ENCODE measurements at regions of chr6 and their contacts with region 1.

Region 1: GRCh38 chr6:128903715-128904114 is 20.8 kb downstream of the LAMA2 start:
- DNase-seq: no peak
- ATAC-seq: peak in 2 of 8 donors; percentile 17 to 56
- H3K4me3 ChIP-seq: no peak overlapping the region
- H3K27ac ChIP-seq: peak overlapping the region in 1 of 10 donors; percentile 0
- H3K4me1 ChIP-seq: peaks cover 0 to 46% (median 12%) of the 10 kb centered on the region in 9 donors
- H3K27me3 ChIP-seq: no peaks in the 10 kb centered on the region
- CTCF ChIP-seq: no peak

Region 2: GRCh38 chr6:128857806-128858205 is 45.9 kb before region 1 on chr6:
- intact Hi-C with region 1: loop called in 1 of 10 experiments (anchors 1 kb)
- DNase-seq: no peak
- ATAC-seq: peak in 1 of 8 donors; percentile 55
- H3K4me3 ChIP-seq: no peak overlapping the region
- H3K27ac ChIP-seq: no peak overlapping the region
- H3K4me1 ChIP-seq: no peaks in the 10 kb centered on the region
- H3K27me3 ChIP-seq: no peaks in the 10 kb centered on the region
- CTCF ChIP-seq: no peak

Measured in heart right ventricle (tissue), 16 donors.